ENCODE measurements at regions of chr4 and their contacts with region 1.

Region 1: GRCh38 chr4:102826890-102827673 is at the start of gene UBE2D3:
- DNase-seq: peak; percentile 97
- ATAC-seq: peak; percentile 44
- H3K4me3 Mint-ChIP-seq: no peak within 1 kb of the TSS
- H3K27ac Mint-ChIP-seq: no peak within 1 kb of the TSS
- H3K4me1 Mint-ChIP-seq: peaks cover 27% of the 10 kb centered on the region
- H3K27me3 Mint-ChIP-seq: no peaks in the 10 kb centered on the region
- total RNA-seq, gene UBE2D3: 376 to 380 TPM

Region 2: GRCh38 chr4:102500696-102501446 is 326.2 kb before region 1 on chr4 and contains the start of gene NFKB1:
- POLR2A ChIA-PET with region 1: interaction called, 15 read pairs
- DNase-seq: peak; percentile 75
- ATAC-seq: peak; percentile 64
- H3K4me3 Mint-ChIP-seq: peak within 1 kb of the TSS; percentile 90
- H3K27ac Mint-ChIP-seq: peak within 1 kb of the TSS; percentile 90
- H3K4me1 Mint-ChIP-seq: peaks cover 17% of the 10 kb centered on the region
- H3K27me3 Mint-ChIP-seq: no peaks in the 10 kb centered on the region
- total RNA-seq, gene NFKB1: 129 to 130 TPM

Region 3: GRCh38 chr4:102610007-102610406 is 217.1 kb before region 1 on chr4:
- POLR2A ChIA-PET with region 1: interaction called, 19 read pairs
- DNase-seq: no peak
- ATAC-seq: no peak
- H3K4me3 Mint-ChIP-seq: peak overlapping the region; percentile 41
- H3K27ac Mint-ChIP-seq: peak overlapping the region; percentile 74
- H3K4me1 Mint-ChIP-seq: peaks cover 76% of the 10 kb centered on the region
- H3K27me3 Mint-ChIP-seq: no peaks in the 10 kb centered on the region

Region 4: GRCh38 chr4:102705351-102705935 is 121.6 kb before region 1 on chr4:
- POLR2A ChIA-PET with region 1: no interaction called
- DNase-seq: no peak
- ATAC-seq: no peak
- H3K4me3 Mint-ChIP-seq: no peak overlapping the region
- H3K27ac Mint-ChIP-seq: no peak overlapping the region
- H3K4me1 Mint-ChIP-seq: no peaks in the 10 kb centered on the region
- H3K27me3 Mint-ChIP-seq: no peaks in the 10 kb centered on the region

Region 5: GRCh38 chr4:102760645-102761295 is 66.3 kb before region 1 on chr4 and contains the start of gene MANBA:
- POLR2A ChIA-PET with region 1: interaction called, 28 read pairs
- DNase-seq: peak; percentile 86
- ATAC-seq: peak; percentile 94
- H3K4me3 Mint-ChIP-seq: peak within 1 kb of the TSS; percentile 96
- H3K27ac Mint-ChIP-seq: peak within 1 kb of the TSS; percentile 91
- H3K4me1 Mint-ChIP-seq: peaks cover 35% of the 10 kb centered on the region
- H3K27me3 Mint-ChIP-seq: no peaks in the 10 kb centered on the region
- total RNA-seq, gene MANBA: 23.8 to 27.2 TPM

Region 6: GRCh38 chr4:102809691-102810090 is 17.4 kb before region 1 on chr4:
- POLR2A ChIA-PET with region 1: interaction called, 23 read pairs
- DNase-seq: no peak
- ATAC-seq: no peak
- H3K4me3 Mint-ChIP-seq: peak overlapping the region; percentile 9
- H3K27ac Mint-ChIP-seq: no peak overlapping the region
- H3K4me1 Mint-ChIP-seq: peaks cover 52% of the 10 kb centered on the region
- H3K27me3 Mint-ChIP-seq: no peaks in the 10 kb centered on the region

Region 7: DNA sequence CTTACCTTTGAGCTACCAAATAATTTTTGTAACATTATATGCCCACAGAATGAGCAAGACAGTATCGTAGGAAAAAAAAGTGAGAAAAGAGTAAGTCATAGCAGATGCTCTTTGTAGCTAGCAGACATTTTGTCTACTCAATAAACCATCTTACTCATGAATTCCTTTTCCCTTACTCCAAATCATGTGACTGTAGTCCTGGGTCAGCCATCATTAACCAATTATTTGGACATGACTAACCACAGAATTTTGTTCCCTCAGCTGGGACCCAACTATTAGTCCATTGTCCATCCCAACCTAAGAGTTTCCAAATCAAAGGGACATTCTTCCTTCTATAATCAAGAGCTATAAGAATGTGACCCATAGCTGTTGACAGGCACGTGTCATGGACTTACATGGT is 11.1 kb before region 1 on chr4:
- POLR2A ChIA-PET with region 1: interaction called, 30 read pairs
- DNase-seq: no peak
- ATAC-seq: no peak
- H3K4me3 Mint-ChIP-seq: no peak overlapping the region
- H3K27ac Mint-ChIP-seq: no peak overlapping the region
- H3K4me1 Mint-ChIP-seq: peaks cover 68% of the 10 kb centered on the region
- H3K27me3 Mint-ChIP-seq: no peaks in the 10 kb centered on the region

Region 8: DNA sequence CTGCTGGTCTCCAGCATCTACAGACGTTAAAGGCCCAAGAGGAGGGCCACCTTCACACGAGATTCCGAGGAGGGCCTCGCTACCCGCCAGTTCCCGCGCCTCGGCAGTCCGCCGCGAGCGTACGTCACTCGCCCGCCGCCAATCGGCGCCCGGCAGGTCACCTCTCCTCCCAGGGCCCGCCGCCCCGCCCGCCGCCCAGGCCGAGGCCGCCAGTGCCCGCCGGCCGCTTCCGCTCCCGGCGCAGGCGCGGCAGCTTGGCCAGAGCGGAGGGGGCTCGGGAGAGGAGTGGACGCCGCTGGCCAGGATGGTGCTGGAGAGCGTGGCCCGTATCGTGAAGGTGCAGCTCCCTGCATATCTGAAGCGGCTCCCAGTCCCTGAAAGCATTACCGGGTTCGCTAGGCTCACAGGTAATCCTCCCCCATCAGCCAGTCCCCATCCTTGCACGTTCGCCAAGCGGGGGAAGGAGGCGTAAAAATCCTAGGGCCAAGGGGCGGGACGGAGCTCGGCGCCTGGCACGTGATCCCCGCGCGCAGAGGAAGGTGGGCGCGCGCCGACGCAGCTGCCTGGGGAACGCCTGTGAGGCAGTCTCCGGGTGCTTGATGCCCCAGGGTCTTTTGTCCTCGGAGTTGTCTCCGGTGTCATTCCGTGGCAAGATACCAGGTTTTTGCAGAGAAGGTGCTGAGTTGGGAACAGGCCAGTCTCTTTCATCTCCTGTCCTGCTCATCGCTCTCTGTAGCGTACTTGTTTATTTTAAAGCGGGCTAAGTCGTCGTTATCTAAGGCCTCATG is 41.9 kb after region 1 on chr4 and contains the start of gene CISD2:
- POLR2A ChIA-PET with region 1: interaction called, 226 read pairs
- DNase-seq: peak; percentile 96
- ATAC-seq: peak; percentile 89
- H3K4me3 Mint-ChIP-seq: peak within 1 kb of the TSS; percentile 95
- H3K27ac Mint-ChIP-seq: peak within 1 kb of the TSS; percentile 99
- H3K4me1 Mint-ChIP-seq: peaks cover 54% of the 10 kb centered on the region
- H3K27me3 Mint-ChIP-seq: no peaks in the 10 kb centered on the region
- total RNA-seq, gene CISD2: 25.2 to 28.5 TPM

Measured in activated naive CD8-positive, alpha-beta T cell treated with anti-CD3 and anti-CD28 coated beads, Interleukin-2, amount 10 ng/mL, durations not matched to agents 7 days and 5 days (primary cell).